ENCODE measurements at regions of chr1 and their contacts with region 1.

Region 1: GRCh38 chr1:192516776-192517297 is 58.7 kb upstream of the RGS1 start:
- DNase-seq: peak; percentile 89
- H3K4me3 Mint-ChIP-seq: peak overlapping the region; percentile 81
- H3K27ac Mint-ChIP-seq: peak overlapping the region; percentile 89
- H3K4me1 Mint-ChIP-seq: peaks cover 40% of the 10 kb centered on the region
- H3K27me3 Mint-ChIP-seq: no peaks in the 10 kb centered on the region

Region 2: GRCh38 chr1:192477630-192478029 is 39.2 kb before region 1 on chr1:
- intact Hi-C with region 1: loop called (anchors 2 kb)
- DNase-seq: no peak
- H3K4me3 Mint-ChIP-seq: no peak overlapping the region
- H3K27ac Mint-ChIP-seq: no peak overlapping the region
- H3K4me1 Mint-ChIP-seq: peaks cover 2% of the 10 kb centered on the region
- H3K27me3 Mint-ChIP-seq: peaks cover 7% of the 10 kb centered on the region

Region 3: GRCh38 chr1:192539297-192540092 is 22.7 kb after region 1 on chr1:
- intact Hi-C with region 1: loop called (anchors 1 kb)
- DNase-seq: no peak
- H3K4me3 Mint-ChIP-seq: peak overlapping the region; percentile 67
- H3K27ac Mint-ChIP-seq: peak overlapping the region; percentile 73
- H3K4me1 Mint-ChIP-seq: peaks cover 52% of the 10 kb centered on the region
- H3K27me3 Mint-ChIP-seq: no peaks in the 10 kb centered on the region

Region 4: GRCh38 chr1:192550922-192551534 is 34.2 kb after region 1 on chr1:
- intact Hi-C with region 1: no loop called
- DNase-seq: peak; percentile 63
- H3K4me3 Mint-ChIP-seq: no peak overlapping the region
- H3K27ac Mint-ChIP-seq: peak overlapping the region; percentile 71
- H3K4me1 Mint-ChIP-seq: peaks cover 30% of the 10 kb centered on the region
- H3K27me3 Mint-ChIP-seq: no peaks in the 10 kb centered on the region

Region 5: DNA sequence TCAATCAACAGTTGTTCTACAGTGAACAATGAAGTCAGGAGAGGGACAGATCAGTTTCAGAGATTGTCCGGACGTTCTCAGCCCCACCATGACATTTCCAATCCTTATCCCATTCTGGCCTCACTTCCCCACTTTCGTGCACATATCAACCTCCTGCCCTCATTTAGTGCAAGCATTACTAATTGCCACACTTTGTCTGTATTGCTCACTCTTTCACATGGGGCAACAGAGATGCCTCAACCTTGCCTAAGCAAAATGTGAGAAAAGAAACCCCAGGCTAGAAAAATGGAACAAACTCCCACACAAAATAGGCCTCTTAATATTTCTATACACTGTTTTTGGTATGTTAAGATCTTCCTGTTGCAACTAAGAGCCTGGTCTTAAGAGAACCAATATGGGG is 49.8 kb after region 1 on chr1:
- intact Hi-C with region 1: loop called (anchors 2 kb)
- DNase-seq: no peak
- H3K4me3 Mint-ChIP-seq: no peak overlapping the region
- H3K27ac Mint-ChIP-seq: no peak overlapping the region
- H3K4me1 Mint-ChIP-seq: peaks cover 43% of the 10 kb centered on the region
- H3K27me3 Mint-ChIP-seq: no peaks in the 10 kb centered on the region

Region 6: DNA sequence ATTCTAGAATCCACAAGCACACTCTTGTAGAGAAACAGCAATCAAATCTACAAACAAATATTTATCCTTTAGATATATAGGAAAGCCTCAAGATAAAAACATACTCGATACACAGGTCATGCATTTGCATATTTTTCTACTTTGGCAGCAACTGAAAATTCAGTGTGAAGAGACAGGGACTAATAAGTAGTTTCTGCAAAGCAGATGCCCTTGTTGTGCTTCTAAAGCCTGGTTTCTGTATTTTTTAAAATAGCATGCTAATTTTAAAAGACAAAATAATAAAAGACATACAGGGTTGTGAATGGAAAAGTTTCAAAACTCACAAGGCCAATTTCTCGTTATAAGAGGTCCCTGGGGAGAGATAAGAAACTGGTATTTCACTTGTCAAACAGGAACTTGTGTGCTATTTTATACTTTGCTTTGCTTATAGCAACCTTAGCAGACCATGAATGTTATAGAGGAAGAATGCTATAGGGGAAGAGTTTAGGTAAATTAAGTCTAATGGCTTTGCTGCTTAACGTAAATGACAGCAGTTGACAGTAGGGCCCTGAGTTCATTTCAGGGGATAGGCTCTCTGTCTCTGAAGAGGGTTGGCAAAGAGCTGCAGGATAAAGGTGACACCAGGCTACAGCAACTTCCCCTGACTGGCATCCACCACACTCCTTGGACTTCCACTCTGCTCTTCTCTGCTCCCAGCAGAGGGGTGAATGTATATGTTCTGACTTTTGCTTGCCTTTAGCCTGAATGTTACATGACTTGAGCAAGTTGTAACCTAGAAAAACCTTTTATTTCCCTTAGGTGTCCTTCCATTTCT is 109.7 kb after region 1 on chr1:
- intact Hi-C with region 1: no loop called
- DNase-seq: no peak
- H3K4me3 Mint-ChIP-seq: no peak overlapping the region
- H3K27ac Mint-ChIP-seq: no peak overlapping the region
- H3K4me1 Mint-ChIP-seq: no peaks in the 10 kb centered on the region
- H3K27me3 Mint-ChIP-seq: peaks cover 32% of the 10 kb centered on the region

Region 7: DNA sequence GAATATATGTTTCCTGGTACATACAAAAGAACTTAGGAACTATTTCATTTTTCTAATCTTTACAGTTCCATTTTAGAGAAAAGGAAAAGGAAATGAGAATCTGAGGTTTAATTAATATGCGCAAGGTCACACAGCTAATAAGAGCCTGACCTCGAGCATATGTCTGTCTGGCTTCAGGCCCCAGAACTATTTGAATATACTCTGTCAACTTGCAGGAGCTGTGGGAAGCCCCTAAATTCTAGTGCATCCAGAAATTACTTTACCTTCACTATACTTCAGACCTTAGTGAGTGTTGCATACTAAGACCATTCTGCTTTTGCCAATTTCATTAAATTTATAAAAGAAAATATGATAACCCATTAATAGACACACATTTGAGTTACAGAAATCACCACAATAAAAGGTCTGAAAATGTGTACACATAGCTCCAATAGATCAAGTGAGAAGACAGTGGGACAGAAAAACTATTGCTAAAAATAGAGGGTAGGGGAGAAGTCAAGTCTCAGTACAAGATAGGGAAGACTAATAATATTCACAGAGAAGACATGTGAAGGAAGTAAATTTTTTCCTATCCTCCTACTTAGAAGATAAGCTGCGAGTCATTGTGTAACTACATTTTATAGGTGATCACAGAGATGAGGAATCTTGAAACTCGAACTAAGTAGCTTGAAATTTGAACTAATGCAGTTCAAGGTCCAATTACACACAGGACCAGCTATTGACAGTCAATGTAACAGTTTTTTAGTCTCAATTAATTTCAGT is 123.0 kb after region 1 on chr1:
- intact Hi-C with region 1: loop called (anchors 1 kb)
- DNase-seq: no peak
- H3K4me3 Mint-ChIP-seq: no peak overlapping the region
- H3K27ac Mint-ChIP-seq: no peak overlapping the region
- H3K4me1 Mint-ChIP-seq: peaks cover 4% of the 10 kb centered on the region
- H3K27me3 Mint-ChIP-seq: peaks cover 4% of the 10 kb centered on the region

Measured in activated CD4-positive, alpha-beta T cell treated with anti-CD3 and anti-CD28 coated beads, Interleukin-2, amount 10 ng/mL, durations not matched to agents 24 days and 14 days (primary cell).